Activated CD4-positive, alpha-beta T cell treated with anti-CD3 and anti-CD28 coated beads for 36 hours (primary cell): ENCODE measurements at regions of chr6 and their contacts with region 1.

Region 1: GRCh38 chr6:137313928-137314855 is 95.0 kb upstream of the IFNGR1 start:
- DNase-seq: peak; percentile 87
- ATAC-seq: peak; percentile 70
- H3K4me3 Mint-ChIP-seq: no peak overlapping the region
- H3K27ac Mint-ChIP-seq: no peak overlapping the region
- H3K4me1 Mint-ChIP-seq: no peaks in the 10 kb centered on the region
- H3K27me3 Mint-ChIP-seq: peaks cover 8% of the 10 kb centered on the region

Region 2: GRCh38 chr6:136262940-136263339 is 1051.3 kb before region 1 on chr6:
- CTCF ChIA-PET with region 1: no interaction called
- POLR2A ChIA-PET with region 1: no interaction called
- intact Hi-C with region 1: no loop called
- DNase-seq: no peak
- ATAC-seq: no peak
- H3K4me3 Mint-ChIP-seq: no peak overlapping the region
- H3K27ac Mint-ChIP-seq: peak overlapping the region; percentile 2
- H3K4me1 Mint-ChIP-seq: peaks cover 20% of the 10 kb centered on the region
- H3K27me3 Mint-ChIP-seq: no peaks in the 10 kb centered on the region

Region 3: GRCh38 chr6:136967876-136968752 is 346.1 kb before region 1 on chr6:
- CTCF ChIA-PET with region 1: no interaction called
- POLR2A ChIA-PET with region 1: no interaction called
- intact Hi-C with region 1: loop called (anchors 1 to 2 kb)
- DNase-seq: peak; percentile 81
- ATAC-seq: peak; percentile 83
- H3K4me3 Mint-ChIP-seq: no peak overlapping the region
- H3K27ac Mint-ChIP-seq: no peak overlapping the region
- H3K4me1 Mint-ChIP-seq: no peaks in the 10 kb centered on the region
- H3K27me3 Mint-ChIP-seq: peaks cover 23% of the 10 kb centered on the region

Region 4: GRCh38 chr6:137076277-137077068 is 237.7 kb before region 1 on chr6:
- CTCF ChIA-PET with region 1: interaction called, 5 read pairs
- POLR2A ChIA-PET with region 1: no interaction called
- intact Hi-C with region 1: loop called (anchors 1 to 5 kb)
- DNase-seq: peak; percentile 78
- ATAC-seq: peak; percentile 92
- H3K4me3 Mint-ChIP-seq: no peak overlapping the region
- H3K27ac Mint-ChIP-seq: no peak overlapping the region
- H3K4me1 Mint-ChIP-seq: no peaks in the 10 kb centered on the region
- H3K27me3 Mint-ChIP-seq: peaks cover 27% of the 10 kb centered on the region

Region 5: DNA sequence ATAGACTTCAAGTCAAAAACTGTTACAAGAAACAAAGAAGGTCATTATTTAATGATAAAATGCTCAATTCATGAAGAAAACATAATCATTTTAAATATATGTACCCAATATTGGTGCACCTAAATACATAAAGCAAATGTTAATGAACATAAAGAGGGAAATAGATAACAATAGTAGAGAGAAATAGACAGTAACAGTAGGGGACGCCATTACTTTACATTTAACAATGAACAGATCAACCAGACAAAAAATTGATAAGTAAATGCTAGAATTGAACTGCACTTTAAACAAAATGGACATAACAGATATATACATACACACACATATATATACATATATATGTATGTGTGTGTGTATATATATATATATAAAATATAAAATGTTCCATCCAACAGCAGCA is 178.1 kb before region 1 on chr6:
- CTCF ChIA-PET with region 1: no interaction called
- POLR2A ChIA-PET with region 1: no interaction called
- intact Hi-C with region 1: loop called (anchors 1 to 5 kb)
- DNase-seq: no peak
- ATAC-seq: no peak
- H3K4me3 Mint-ChIP-seq: no peak overlapping the region
- H3K27ac Mint-ChIP-seq: no peak overlapping the region
- H3K4me1 Mint-ChIP-seq: no peaks in the 10 kb centered on the region
- H3K27me3 Mint-ChIP-seq: peaks cover 14% of the 10 kb centered on the region

Region 6: GRCh38 chr6:137150072-137150471 is 164.1 kb before region 1 on chr6:
- CTCF ChIA-PET with region 1: interaction called, 3 read pairs
- POLR2A ChIA-PET with region 1: no interaction called
- intact Hi-C with region 1: loop called in 1 of 2 experiments (anchors 5 kb)
- DNase-seq: no peak
- ATAC-seq: no peak
- H3K4me3 Mint-ChIP-seq: no peak overlapping the region
- H3K27ac Mint-ChIP-seq: no peak overlapping the region
- H3K4me1 Mint-ChIP-seq: peaks cover 4% of the 10 kb centered on the region
- H3K27me3 Mint-ChIP-seq: peaks cover 7% of the 10 kb centered on the region

Region 7: DNA sequence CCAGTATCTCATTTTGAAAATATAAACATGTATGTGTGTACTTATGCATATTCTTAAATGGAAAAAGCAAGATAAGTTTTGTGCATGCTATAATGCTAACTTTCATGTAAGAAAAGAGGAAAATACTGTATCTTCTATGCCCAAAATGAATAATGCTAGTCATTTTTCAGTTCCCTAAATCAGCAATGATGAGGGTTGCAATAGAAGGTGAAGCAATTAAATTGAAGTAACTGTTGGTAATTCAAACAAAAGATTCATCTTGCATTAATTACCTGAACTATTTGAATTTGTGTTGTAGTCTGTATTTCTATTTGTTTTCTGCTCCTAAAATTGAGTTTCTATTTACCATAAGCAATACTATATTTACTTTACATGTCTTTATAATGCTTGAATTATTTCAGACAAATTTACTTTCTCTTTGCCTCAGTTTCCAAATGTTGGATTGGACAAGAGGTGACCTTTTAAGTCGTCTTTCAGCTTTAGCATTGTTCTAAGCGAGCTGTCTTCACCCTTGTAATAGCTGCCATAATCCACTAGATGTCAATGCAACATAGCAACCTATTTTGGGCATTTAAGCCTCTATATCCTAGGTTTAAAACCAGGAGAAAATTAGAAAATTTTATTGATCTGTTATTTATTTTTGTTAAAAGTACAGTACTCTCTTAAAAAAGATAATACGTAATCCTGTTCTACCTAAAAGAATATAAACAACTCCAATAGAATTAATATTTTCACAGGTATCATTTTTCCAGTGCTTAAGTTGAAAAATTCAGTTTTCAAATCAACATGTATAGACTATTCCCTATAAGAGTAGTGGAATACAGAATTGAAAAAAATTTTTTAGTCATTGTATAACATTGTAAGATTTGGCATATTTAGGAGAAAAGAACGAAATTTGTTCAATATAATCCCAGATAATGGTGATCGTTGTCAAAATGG is 42.7 kb before region 1 on chr6:
- CTCF ChIA-PET with region 1: interaction called, 18 read pairs
- POLR2A ChIA-PET with region 1: no interaction called
- intact Hi-C with region 1: loop called (anchors 1 kb)
- DNase-seq: no peak
- ATAC-seq: peak; percentile 51
- H3K4me3 Mint-ChIP-seq: no peak overlapping the region
- H3K27ac Mint-ChIP-seq: no peak overlapping the region
- H3K4me1 Mint-ChIP-seq: peaks cover 3% of the 10 kb centered on the region
- H3K27me3 Mint-ChIP-seq: peaks cover 8% of the 10 kb centered on the region